IMR-90 (cell line): ENCODE measurements at regions of chr17 and their contacts with region 1.

Region 1: DNA sequence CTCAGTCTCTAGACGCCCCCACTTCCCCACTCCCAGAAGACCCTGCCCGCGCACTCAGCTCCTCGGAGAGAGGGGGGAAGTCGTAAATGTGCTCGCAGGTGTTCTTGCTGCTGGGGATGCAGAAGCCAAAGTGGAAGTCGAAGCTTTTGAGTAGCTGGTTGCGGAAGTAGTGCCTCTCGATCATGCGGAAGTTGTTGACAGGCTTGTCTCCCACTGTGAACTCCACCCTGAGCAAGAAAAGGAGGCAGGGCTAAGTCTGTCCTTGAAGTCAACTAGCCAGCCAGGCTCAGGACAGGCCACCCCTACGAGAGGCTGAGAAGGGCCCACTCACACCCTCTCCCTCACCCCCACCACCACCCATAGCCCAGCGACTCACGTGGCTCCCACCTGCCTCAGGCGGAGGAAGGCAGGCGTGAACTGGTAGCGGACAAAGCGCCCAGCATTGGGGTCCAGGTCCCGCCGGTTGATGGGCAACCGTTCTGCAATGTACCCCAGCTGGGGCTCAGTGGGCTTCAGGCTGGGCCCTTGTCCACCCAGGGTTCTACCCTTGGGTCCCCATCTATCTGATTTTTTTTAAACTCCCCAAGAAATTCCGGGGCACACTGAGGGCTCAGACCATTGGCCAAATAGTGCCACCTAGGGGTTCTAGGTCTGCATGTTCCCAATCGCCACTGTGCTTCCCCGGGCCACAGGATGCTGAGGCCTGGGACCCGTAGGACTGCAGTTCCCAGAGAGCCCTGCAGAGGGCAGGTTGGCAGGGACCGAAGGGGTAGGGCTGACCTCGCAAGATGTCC is 4.6 kb downstream of the UNC119 start:
- DNase-seq: peak; percentile 50
- ATAC-seq: peak; percentile 65
- H3K4me3 ChIP-seq: no peak overlapping the region
- H3K27ac ChIP-seq: no peak overlapping the region
- H3K4me1 ChIP-seq: peaks cover 6% of the 10 kb centered on the region
- H3K27me3 ChIP-seq: no peaks in the 10 kb centered on the region
- CTCF ChIP-seq: peak; percentile 80
- POLR2A ChIP-seq: no peak
- RAD21 ChIP-seq: peak; percentile 52

Region 2: DNA sequence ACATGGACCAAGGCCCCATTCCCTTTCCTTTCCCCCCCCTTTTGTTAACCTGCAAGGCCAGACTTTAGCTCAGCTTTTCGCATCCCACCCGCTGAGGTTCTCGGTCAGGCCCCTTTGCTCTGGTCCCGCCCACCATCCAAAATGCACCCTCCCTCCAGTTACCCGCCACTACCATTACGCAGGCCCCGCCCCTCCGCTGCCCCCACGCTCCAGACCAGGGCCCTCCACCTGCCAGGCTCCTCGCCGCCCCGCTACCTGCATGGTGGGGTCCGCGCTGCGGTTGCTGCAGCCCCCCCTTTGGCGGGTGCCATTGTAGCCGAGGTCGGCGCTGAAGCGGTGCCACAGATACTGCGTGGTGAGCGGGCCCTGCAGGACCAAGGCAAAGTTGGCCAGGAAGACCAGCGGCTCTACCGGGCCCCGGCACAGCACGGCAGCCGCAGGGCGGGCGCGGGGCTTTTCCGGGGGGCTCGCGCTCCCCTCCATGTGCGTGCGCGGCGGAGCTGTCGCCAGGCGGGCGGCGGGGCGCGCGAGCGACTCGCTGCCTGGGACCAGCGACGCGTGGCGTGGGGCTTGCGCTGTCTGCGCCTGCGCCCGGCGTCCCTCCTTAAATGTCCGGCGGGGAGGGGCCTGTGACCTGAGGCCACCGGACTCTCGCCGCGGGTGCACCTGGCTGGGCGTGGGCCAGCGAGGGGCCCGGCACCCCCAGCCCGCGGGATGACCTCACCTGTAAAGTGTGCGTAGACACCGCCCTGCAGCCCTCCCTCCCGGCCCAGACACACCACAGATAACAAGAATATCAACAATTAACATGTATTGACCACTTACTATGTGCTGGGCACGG is 142.0 kb before region 1 on chr17 and contains the start of gene SLC46A1:
- CTCF ChIA-PET with region 1: no interaction called
- POLR2A ChIA-PET with region 1: no interaction called
- dilution Hi-C with region 1: no loop called
- in situ Hi-C with region 1: no loop called
- intact Hi-C with region 1: loop called (anchors 10 kb)
- DNase-seq: no peak
- ATAC-seq: peak; percentile 84
- H3K4me3 ChIP-seq: peak within 1 kb of the TSS; percentile 66
- H3K27ac ChIP-seq: no peak within 1 kb of the TSS; the same call in 1 of the 2 replicates
- H3K4me1 ChIP-seq: peaks cover 3% of the 10 kb centered on the region
- H3K27me3 ChIP-seq: 0 out of 2 replicates have a peak, but pooled peaks cover 2% of the 10 kb centered on the region
- CTCF ChIP-seq: no peak
- POLR2A ChIP-seq: no peak
- RAD21 ChIP-seq: no peak
- total RNA-seq, gene SLC46A1: 2.7 and 2.8 TPM in 2 replicates

Region 3: GRCh38 chr17:29195465-29196081 is 647.8 kb after region 1 on chr17:
- CTCF ChIA-PET with region 1: no interaction called
- POLR2A ChIA-PET with region 1: no interaction called
- dilution Hi-C with region 1: no loop called
- in situ Hi-C with region 1: no loop called
- intact Hi-C with region 1: no loop called
- DNase-seq: no peak
- ATAC-seq: no peak
- H3K4me3 ChIP-seq: no peak overlapping the region
- H3K27ac ChIP-seq: no peak overlapping the region
- H3K4me1 ChIP-seq: peaks cover 2% of the 10 kb centered on the region; the same call in 1 of the 2 replicates
- H3K27me3 ChIP-seq: peaks cover 13% of the 10 kb centered on the region
- CTCF ChIP-seq: no peak
- POLR2A ChIP-seq: no peak
- RAD21 ChIP-seq: no peak